Mammary epithelial cell (primary cell): ENCODE measurements at regions of chr22 and their contacts with region 1.

Region 1: GRCh38 chr22:23008887-23009286 is 61.4 kb upstream of the GNAZ start:
- DNase-seq: no peak
- H3K4me3 ChIP-seq: no peak overlapping the region
- H3K27ac ChIP-seq: no peak overlapping the region
- H3K4me1 ChIP-seq: no peaks in the 10 kb centered on the region
- H3K27me3 ChIP-seq: no peaks in the 10 kb centered on the region
- CTCF ChIP-seq: no peak

Region 2: GRCh38 chr22:23098718-23099530 is 90.0 kb after region 1 on chr22:
- CTCF ChIA-PET with region 1: no interaction called
- dilution Hi-C with region 1: loop called (anchors 5 kb)
- in situ Hi-C with region 1: no loop called
- intact Hi-C with region 1: no loop called
- DNase-seq: no peak
- H3K4me3 ChIP-seq: no peak overlapping the region
- H3K27ac ChIP-seq: no peak overlapping the region
- H3K4me1 ChIP-seq: no peaks in the 10 kb centered on the region
- H3K27me3 ChIP-seq: no peaks in the 10 kb centered on the region
- CTCF ChIP-seq: no peak